ENCODE measurements at regions of chr1 and their contacts with region 1.

Region 1: GRCh38 chr1:27445177-27445936 is 44.6 kb downstream of the WASF2 start:
- DNase-seq: no peak
- ATAC-seq: peak in 1 of 8 donors; percentile 35
- H3K4me3 ChIP-seq: no peak overlapping the region
- H3K27ac ChIP-seq: peak overlapping the region in 2 of 10 donors; percentile 0 to 6
- H3K4me1 ChIP-seq: peaks cover 0 to 77% (median 46%) of the 10 kb centered on the region in 9 donors
- H3K27me3 ChIP-seq: no peaks in the 10 kb centered on the region
- CTCF ChIP-seq: no peak

Region 2: DNA sequence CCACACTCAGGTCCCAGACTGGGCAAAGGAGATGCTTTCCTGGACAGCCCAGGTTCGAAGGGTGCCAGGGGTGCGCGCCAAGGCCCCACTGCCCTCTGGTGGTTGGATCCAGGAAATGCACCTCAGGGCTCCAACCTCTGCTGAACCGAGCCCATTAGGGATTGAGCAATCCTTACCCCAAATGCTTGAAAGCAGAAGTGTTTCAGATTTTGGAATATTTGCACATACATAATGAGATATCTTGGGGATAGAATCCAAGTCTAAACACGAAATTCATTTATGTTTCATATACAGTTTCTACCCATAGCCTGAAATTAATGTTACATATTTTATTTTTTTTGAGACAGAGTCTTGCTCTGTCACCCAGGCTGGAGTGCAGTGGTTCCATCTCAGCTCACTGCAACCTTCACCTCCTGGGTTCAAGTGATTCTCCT is 347.9 kb before region 1 on chr1:
- intact Hi-C with region 1: no loop called
- DNase-seq: peak; percentile 74 to 77
- ATAC-seq: peak; percentile 56 to 73 (median 63)
- H3K4me3 ChIP-seq: no peak overlapping the region
- H3K27ac ChIP-seq: peak overlapping the region in 2 of 10 donors; percentile 71 to 80
- H3K4me1 ChIP-seq: peaks cover 14 to 39% (median 35%) of the 10 kb centered on the region in 9 donors
- H3K27me3 ChIP-seq: no peaks in the 10 kb centered on the region
- CTCF ChIP-seq: peak; percentile 96 to 99 (median 97)

Region 3: GRCh38 chr1:27357281-27358037 is 87.9 kb before region 1 on chr1:
- intact Hi-C with region 1: no loop called
- DNase-seq: peak; percentile 69 to 76
- ATAC-seq: peak; percentile 33 to 87 (median 69)
- H3K4me3 ChIP-seq: peak overlapping the region in 2 of 10 donors; percentile 15 to 41
- H3K27ac ChIP-seq: peak overlapping the region in 2 of 10 donors; percentile 21 to 36
- H3K4me1 ChIP-seq: peaks cover 0 to 29% (median 10%) of the 10 kb centered on the region in 9 donors
- H3K27me3 ChIP-seq: no peaks in the 10 kb centered on the region
- CTCF ChIP-seq: peak; percentile 94 to 100 (median 98)

Region 4: GRCh38 chr1:27481994-27482620 is 36.8 kb after region 1 on chr1:
- intact Hi-C with region 1: loop called in 1 of 10 experiments (anchors 5 kb)
- DNase-seq: no peak
- ATAC-seq: no peak
- H3K4me3 ChIP-seq: no peak overlapping the region
- H3K27ac ChIP-seq: peak overlapping the region in 1 of 10 donors; percentile 21
- H3K4me1 ChIP-seq: peaks cover 10 to 87% (median 61%) of the 10 kb centered on the region in 9 donors
- H3K27me3 ChIP-seq: no peaks in the 10 kb centered on the region
- CTCF ChIP-seq: no peak

Region 5: DNA sequence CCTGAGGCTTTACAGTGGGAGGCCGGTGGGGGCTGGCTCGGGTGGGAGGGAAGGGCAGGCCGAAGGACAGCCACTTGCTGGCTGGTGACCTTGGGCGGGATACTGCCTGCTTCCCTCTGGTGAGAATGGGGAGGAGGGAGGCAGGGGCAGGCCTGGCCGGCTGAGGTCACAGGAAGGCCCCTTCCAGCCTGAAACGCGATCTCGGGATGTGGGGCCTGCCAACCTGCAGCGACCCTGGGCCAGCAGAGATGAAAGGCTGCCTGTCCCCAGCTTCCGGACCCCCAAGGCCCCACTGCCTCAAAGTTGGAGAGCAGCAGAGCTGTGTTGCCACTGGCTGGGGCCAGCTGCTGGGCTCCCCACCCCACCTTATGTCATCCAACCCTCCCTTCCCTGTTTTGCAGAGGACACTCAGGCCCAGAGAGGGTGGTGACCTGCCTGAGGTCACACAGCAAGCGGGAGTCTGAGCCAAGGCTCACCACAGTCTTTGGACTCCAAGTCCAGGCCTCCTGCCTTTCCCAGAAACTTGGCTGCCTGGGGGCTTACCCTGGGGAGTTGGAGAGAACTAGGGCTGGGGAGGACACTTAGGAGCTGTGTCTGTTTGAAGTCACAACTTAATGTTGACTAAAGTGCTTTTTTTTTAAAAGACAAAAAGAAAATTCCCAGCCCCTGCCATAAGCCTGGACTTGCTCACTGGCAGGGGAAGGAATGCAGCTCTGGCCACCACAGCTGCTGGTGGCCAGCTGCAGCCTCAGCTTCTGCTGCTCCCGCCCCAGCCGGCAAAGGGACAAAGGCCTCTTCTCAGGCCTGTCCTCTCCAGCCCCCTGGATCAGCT is 59.4 kb after region 1 on chr1:
- intact Hi-C with region 1: no loop called
- DNase-seq: peak; percentile 90 to 93
- ATAC-seq: peak; percentile 93 to 96 (median 94)
- H3K4me3 ChIP-seq: peak overlapping the region in 4 of 10 donors; percentile 31 to 43 (median 38)
- H3K27ac ChIP-seq: peak overlapping the region; percentile 88 to 99 (median 97)
- H3K4me1 ChIP-seq: peaks cover 20 to 44% (median 30%) of the 10 kb centered on the region in 9 donors
- H3K27me3 ChIP-seq: no peaks in the 10 kb centered on the region
- CTCF ChIP-seq: peak in 1 of 9 donors; percentile 6